Esophagus squamous epithelium (tissue), 5 donors: ENCODE measurements at regions of chr15 and their contacts with region 1.

Region 1: DNA sequence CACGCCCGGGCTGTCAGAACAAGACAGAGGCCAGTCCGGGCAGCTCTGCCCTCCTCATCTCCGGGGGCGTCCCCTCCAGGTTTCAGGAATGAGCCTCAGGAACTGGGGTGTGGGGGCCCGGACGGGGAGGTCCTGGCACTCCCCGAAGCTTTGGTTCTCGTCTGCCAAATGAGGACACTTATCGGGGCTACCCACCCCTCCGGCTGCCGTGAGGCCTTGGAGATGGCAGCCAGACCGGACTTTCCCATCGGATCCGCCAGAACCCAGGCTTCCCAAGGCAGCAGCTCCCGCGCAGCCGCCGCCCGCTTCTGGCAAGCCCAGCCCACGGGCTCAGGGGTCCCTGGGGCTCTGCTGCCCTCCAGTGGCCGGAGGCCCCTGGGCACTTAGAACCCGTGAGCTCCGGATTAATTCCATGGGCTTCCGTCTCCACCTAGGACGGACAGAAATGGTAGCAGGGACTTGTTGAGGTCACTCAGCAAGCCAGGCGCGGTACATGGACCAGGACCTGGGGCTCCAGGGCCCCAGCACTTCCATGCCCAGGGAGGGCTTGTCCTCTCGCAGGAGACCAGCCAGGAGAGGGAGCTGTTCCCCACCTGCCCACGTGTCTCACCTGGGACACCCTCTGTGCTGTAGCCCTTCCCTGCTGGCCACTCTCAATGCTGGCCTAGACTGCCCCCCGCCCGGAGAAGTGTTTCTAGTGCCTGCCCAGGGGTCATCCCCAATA is 89.4 kb downstream of the LINGO1 start:
- DNase-seq: peak; percentile 24
- H3K4me3 ChIP-seq: peak overlapping the region; percentile 15 to 69 (median 44)
- H3K27ac ChIP-seq: peak overlapping the region; percentile 32 to 71 (median 66)
- H3K4me1 ChIP-seq: peaks cover 12 to 35% (median 20%) of the 10 kb centered on the region in 3 donors
- H3K27me3 ChIP-seq: peaks cover 0 to 5% (median 0%) of the 10 kb centered on the region in 4 donors
- CTCF ChIP-seq: peak; percentile 94 to 99 (median 96)
- POLR2A ChIP-seq: no peak

Region 2: DNA sequence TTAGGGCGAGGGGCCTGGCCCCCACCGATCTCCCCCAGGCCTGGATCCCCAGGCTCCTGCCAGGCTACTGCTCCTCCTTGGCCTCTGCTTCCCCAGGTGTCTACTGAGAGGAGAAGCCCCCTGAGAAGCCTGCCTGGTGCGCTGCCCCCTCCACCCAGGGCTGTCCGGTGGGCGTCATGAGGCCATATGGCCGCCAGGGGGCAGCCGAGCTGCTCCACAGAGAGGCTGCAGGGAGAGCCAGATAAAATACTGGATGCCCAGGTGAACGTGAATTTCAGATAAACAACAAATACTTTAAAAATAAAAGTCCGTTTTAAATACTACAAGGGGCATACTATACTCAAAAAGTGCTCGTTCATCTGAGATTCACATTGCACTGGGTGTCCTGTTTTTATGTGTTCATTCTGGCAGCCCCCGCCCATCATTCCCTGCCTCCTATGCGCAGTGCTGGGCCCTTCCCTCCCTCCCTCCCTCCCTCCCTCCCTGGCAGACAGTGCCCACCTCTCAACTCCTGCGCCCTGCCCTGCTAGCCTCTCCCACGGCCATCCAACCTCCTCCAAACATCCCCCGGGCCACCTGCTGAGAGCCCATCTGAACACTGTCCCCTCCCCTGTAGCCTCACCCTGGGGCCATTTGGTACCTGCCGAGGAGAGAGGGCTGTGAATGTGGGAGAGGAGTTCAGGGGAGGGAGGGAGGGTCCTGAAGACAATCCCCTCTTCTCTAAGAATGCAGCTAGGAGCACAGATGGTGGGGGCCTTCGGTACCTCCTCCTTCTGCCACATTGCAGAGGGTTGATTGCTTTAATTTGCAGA is 518.8 kb before region 1 on chr15:
- intact Hi-C with region 1: loop called (anchors 5 kb)
- DNase-seq: no peak
- H3K4me3 ChIP-seq: no peak overlapping the region
- H3K27ac ChIP-seq: no peak overlapping the region
- H3K4me1 ChIP-seq: peaks cover 0 to 15% (median 0%) of the 10 kb centered on the region in 3 donors
- H3K27me3 ChIP-seq: peaks cover 0 to 10% (median 0%) of the 10 kb centered on the region in 4 donors
- CTCF ChIP-seq: peak; percentile 88 to 92 (median 91)
- POLR2A ChIP-seq: no peak

Region 3: GRCh38 chr15:77107531-77108355 is 435.6 kb before region 1 on chr15:
- intact Hi-C with region 1: loop called (anchors 5 kb)
- DNase-seq: no peak
- H3K4me3 ChIP-seq: no peak overlapping the region
- H3K27ac ChIP-seq: peak overlapping the region in 2 of 4 donors; percentile 18 to 29
- H3K4me1 ChIP-seq: peaks cover 0 to 19% (median 4%) of the 10 kb centered on the region in 3 donors
- H3K27me3 ChIP-seq: no peaks in the 10 kb centered on the region
- CTCF ChIP-seq: peak in 5 of 6 experiments; percentile 34 to 60 (median 53)
- POLR2A ChIP-seq: no peak

Region 4: GRCh38 chr15:77186594-77187011 is 356.7 kb before region 1 on chr15:
- intact Hi-C with region 1: loop called (anchors 10 kb)
- DNase-seq: no peak
- H3K4me3 ChIP-seq: no peak overlapping the region
- H3K27ac ChIP-seq: peak overlapping the region in 3 of 4 donors; percentile 70 to 76 (median 74)
- H3K4me1 ChIP-seq: peaks cover 0 to 35% (median 10%) of the 10 kb centered on the region in 3 donors
- H3K27me3 ChIP-seq: no peaks in the 10 kb centered on the region
- CTCF ChIP-seq: peak in 5 of 6 experiments; percentile 32 to 55 (median 39)
- POLR2A ChIP-seq: no peak

Region 5: DNA sequence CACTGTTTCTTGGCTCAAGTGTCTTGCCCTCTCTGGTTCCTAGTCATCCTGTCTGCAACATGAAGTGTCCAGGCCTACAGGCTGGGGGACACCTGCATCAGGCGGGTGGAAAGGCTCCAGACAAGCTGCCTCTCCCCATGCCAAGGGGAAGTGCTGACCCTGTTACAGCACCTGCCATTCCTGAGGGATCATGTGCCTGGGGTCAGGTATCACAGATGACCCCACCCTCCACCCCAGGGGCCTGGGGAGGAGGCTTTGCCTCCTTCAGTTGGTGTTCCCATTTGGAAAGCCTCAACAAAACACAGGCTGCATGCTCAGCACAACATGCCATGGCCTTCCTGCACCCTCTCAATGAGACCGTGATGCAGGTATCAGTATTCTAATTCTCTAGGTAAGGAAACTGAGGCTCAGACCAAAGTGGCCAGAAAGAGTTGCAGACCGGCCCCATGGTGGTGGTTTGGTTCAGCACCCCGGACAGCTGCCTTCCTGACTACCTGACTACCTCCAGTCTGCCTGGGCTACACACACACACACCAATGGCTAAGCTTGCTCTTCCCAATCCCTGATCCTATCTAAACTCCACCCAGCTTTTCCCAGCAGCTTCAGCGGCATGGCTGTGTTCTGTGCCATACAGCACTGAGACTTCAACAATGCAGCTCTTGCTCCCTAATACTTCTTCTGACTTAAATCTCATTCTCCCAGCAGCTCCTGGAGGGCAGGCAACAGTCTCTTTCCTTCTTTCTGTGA is 159.1 kb after region 1 on chr15:
- intact Hi-C with region 1: no loop called
- DNase-seq: no peak
- H3K4me3 ChIP-seq: no peak overlapping the region
- H3K27ac ChIP-seq: no peak overlapping the region
- H3K4me1 ChIP-seq: no peaks in the 10 kb centered on the region
- H3K27me3 ChIP-seq: peaks cover 0 to 25% (median 0%) of the 10 kb centered on the region in 4 donors
- CTCF ChIP-seq: no peak
- POLR2A ChIP-seq: no peak